Left cardiac atrium (tissue), 4 donors: ENCODE measurements at regions of chr17 and their contacts with region 1.

Region 1: GRCh38 chr17:50079334-50080095 is 15.6 kb upstream of the PDK2 start:
- DNase-seq: no peak
- ATAC-seq: peak; percentile 31 to 64

Region 2: DNA sequence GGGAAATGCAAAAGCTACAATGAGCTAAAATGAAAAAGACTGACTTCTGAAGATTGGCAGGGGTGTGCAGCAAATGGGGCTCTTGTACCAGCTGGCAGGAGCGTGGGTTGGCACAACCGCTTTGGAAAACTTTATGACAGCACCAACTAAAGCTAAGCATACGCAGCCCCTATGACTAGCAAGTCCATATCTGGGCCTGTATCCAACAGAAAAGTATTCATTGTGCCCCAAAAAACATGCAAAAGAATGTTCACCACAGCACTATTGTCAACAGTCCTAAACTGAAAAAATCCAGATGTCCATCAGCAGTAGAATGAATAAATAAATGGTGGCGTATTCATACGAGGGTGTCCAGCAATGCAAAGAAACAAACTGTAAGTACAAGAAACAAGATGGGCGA is 46.2 kb before region 1 on chr17:
- intact Hi-C with region 1: loop called in 1 of 2 experiments (anchors 5 kb)
- DNase-seq: no peak
- ATAC-seq: peak in 1 of 2 donors; percentile 31

Region 3: GRCh38 chr17:50297407-50297865 is 217.9 kb after region 1 on chr17:
- intact Hi-C with region 1: no loop called
- DNase-seq: peak; percentile 81
- ATAC-seq: peak; percentile 93 to 95